ENCODE measurements at regions of chr16 and their contacts with region 1.

Region 1: DNA sequence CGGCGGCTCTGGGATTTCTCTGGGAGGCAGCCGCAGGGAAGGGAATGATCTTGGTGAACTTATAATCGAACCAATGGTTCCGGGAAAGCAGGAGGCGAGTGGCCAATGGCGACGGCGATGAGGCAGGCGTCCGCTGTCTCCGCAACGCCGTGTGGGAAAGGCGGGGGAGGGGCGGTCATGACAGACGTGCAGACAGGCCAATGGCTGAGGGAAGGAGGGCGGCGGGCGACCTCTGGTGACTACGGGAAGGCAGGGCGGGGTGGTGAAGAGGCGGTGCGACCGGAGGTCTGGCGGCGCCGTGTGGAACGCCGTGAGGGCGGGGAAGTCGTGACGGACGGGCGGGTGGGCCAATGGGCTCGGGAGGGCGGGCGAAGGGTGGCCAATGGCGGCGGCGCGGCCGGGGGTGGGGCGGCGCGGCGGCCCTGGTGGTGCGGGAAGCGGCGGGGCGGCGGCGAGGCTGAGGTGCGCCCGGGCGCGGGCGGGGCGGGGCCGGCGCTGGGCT is at the start of gene RAB40C:
- DNase-seq: peak; percentile 96
- H3K4me3 Mint-ChIP-seq: peak within 1 kb of the TSS; percentile 91
- H3K27ac Mint-ChIP-seq: peak within 1 kb of the TSS; percentile 96
- H3K4me1 Mint-ChIP-seq: peaks cover 41% of the 10 kb centered on the region
- H3K27me3 Mint-ChIP-seq: no peaks in the 10 kb centered on the region
- CTCF ChIP-seq: no peak
- total RNA-seq, gene RAB40C: 17.1 and 17.7 TPM in 2 replicates

Region 2: DNA sequence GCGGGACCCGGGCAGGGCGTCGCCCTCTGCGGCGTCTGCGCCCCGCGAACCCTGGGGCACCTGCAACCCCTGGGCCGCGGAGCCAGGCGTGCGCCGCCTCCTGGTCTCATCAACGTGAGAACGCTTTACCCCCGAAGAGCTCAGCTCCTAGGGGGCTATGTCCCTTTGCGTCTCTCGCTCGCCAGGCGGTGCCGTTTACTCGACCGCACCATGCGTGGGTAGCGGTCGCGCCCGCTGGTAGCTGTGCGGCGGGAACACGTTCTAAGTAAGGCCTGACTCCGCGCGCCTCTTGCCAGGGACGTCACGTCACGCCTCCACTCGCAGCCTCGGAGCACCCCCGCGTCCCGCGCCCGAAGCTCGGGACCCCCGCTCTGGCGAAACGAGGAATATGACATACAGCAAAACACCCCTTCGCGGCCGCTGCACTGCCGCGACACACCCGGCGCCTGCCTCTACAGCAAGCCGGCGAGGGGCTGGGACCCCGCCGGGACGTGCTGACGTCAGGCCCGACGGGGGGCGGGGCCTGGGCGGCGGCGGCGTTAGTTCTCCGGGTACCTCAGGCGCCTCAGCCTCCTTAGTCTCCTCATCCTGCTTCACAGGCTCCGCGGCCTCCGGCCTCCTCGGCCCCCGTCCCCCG is 164.5 kb before region 1 on chr16 and contains the start of gene RAB11FIP3:
- CTCF ChIA-PET with region 1: interaction called, 3 read pairs
- POLR2A ChIA-PET with region 1: interaction called, 20 read pairs
- intact Hi-C with region 1: no loop called
- DNase-seq: peak; percentile 74
- H3K4me3 Mint-ChIP-seq: peak within 1 kb of the TSS; percentile 73
- H3K27ac Mint-ChIP-seq: peak within 1 kb of the TSS; percentile 71
- H3K4me1 Mint-ChIP-seq: peaks cover 35% of the 10 kb centered on the region
- H3K27me3 Mint-ChIP-seq: no peaks in the 10 kb centered on the region
- CTCF ChIP-seq: no peak
- total RNA-seq, gene RAB11FIP3: 37.5 and 40.6 TPM in 2 replicates

Region 3: DNA sequence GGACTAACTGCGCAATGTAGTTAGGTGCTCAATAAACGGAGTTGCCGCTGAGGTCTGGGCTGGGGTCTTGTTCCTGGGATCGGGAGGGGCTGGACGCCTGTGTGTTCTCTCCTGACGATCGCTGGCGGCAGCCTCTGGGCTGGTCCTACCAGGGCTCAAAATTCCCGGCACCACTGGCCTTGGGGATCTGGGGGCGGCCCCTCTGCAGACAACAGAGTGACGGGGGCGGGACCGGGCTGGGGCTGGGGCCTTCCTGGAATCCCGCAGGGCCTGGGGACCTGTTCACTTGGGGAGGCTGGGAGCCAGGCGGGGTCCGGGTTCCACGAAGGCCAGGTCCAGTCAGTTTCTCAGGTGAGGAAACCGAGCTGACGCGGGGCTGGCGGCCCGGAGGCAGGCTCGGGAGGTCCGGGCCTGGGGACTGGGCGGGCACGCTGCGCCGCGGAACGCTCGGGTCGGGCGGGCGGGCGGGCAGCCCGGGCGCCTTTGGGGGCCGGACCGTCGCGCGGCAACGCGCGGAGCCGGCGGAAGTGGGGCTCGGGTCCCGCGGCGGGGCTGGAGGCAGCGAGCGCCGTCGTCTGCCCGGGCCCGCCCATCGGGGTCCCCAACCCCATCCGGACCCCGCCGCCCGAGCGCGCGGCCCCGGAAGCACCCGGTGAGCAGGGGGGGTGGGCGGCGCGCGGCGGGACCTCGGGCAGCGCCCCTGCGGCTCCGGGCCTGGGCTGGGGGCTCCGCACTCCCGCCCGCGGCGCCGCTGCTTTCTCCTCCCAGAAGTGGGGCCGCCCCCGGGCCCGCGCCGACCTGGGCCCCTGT is 20.1 kb before region 1 on chr16 and contains the start of gene PIGQ:
- CTCF ChIA-PET with region 1: interaction called, 3 read pairs
- POLR2A ChIA-PET with region 1: interaction called, 23 read pairs
- intact Hi-C with region 1: no loop called
- DNase-seq: peak; percentile 45
- H3K4me3 Mint-ChIP-seq: peak within 1 kb of the TSS; percentile 72
- H3K27ac Mint-ChIP-seq: peak within 1 kb of the TSS; percentile 82
- H3K4me1 Mint-ChIP-seq: peaks cover 8% of the 10 kb centered on the region
- H3K27me3 Mint-ChIP-seq: no peaks in the 10 kb centered on the region
- CTCF ChIP-seq: no peak
- total RNA-seq, gene PIGQ: 45.6 and 47.4 TPM in 2 replicates

Region 4: GRCh38 chr16:626787-627186 is 37.1 kb after region 1 on chr16:
- CTCF ChIA-PET with region 1: interaction called, 18 read pairs
- POLR2A ChIA-PET with region 1: interaction called, 88 read pairs
- intact Hi-C with region 1: loop called (anchors 1 kb)
- DNase-seq: peak; percentile 98
- H3K4me3 Mint-ChIP-seq: peak overlapping the region; percentile 51
- H3K27ac Mint-ChIP-seq: peak overlapping the region; percentile 87
- H3K4me1 Mint-ChIP-seq: peaks cover 22% of the 10 kb centered on the region
- H3K27me3 Mint-ChIP-seq: no peaks in the 10 kb centered on the region
- CTCF ChIP-seq: no peak

Region 5: DNA sequence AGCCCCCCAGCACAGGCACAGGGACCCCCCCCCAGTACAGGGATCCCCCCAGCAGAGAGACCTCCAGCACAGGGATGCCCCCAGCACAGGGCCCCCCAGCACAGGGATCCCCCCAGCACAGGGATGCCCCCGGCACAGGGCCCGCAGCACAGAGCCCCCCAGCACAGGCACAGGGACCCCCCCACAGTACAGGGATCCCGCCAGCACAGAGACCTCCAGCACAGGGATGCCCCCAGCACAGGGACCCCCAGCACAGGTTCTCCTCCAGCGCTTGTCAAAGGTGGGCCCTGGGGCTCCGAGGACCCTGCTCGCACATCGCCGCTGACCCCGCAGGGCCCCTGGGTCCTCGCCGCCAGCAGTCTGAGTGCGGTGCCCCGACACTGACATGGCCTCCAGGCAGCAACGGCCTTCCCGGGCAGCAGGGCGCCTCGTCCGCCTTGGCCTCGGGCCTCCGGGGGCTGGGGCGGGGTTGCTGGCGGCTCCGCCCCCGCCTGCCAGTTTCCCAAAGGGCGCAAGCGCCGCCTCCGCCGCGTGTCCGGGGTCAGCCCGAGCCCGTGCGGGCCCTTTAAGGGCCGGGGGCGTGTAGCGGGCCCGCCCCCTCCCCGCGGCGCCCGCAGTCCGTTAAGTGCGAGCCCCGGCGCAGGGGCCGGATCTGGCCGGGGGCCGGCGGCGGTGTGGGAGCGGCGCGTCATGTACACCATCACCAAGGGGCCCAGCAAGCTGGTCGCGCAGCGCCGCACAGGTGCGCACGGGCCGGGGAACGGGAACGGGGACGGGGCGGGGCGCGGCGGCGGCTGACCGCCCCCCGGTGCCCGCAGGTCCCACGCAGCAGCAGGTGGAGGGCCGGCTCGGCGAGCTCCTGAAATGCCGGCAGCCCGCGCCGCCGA is 51.8 kb after region 1 on chr16 and contains the start of gene MCRIP2:
- CTCF ChIA-PET with region 1: interaction called, 4 read pairs
- POLR2A ChIA-PET with region 1: interaction called, 40 read pairs
- intact Hi-C with region 1: loop called (anchors 2 kb)
- DNase-seq: peak; percentile 80
- H3K4me3 Mint-ChIP-seq: peak within 1 kb of the TSS; percentile 77
- H3K27ac Mint-ChIP-seq: peak within 1 kb of the TSS; percentile 59
- H3K4me1 Mint-ChIP-seq: peaks cover 11% of the 10 kb centered on the region
- H3K27me3 Mint-ChIP-seq: no peaks in the 10 kb centered on the region
- CTCF ChIP-seq: no peak
- total RNA-seq, gene MCRIP2: 43.6 and 44.6 TPM in 2 replicates

Region 6: GRCh38 chr16:684067-684794 is 94.5 kb after region 1 on chr16 and contains the start of gene JMJD8:
- CTCF ChIA-PET with region 1: no interaction called
- POLR2A ChIA-PET with region 1: interaction called, 17 read pairs
- intact Hi-C with region 1: no loop called
- DNase-seq: peak; percentile 95
- H3K4me3 Mint-ChIP-seq: peak within 1 kb of the TSS; percentile 76
- H3K27ac Mint-ChIP-seq: peak within 1 kb of the TSS; percentile 61
- H3K4me1 Mint-ChIP-seq: peaks cover 6% of the 10 kb centered on the region
- H3K27me3 Mint-ChIP-seq: no peaks in the 10 kb centered on the region
- CTCF ChIP-seq: no peak
- total RNA-seq, gene JMJD8: 23.6 and 33.4 TPM in 2 replicates

Measured in MCF 10A (cell line).